ENCODE measurements at regions of chr2 and their contacts with region 1.

Region 1: GRCh38 chr2:85728883-85729824 is 24.6 kb upstream of the ATOH8 start:
- DNase-seq: no peak
- H3K4me3 ChIP-seq: no peak overlapping the region
- H3K27me3 ChIP-seq: no peaks in the 10 kb centered on the region
- CTCF ChIP-seq: peak; percentile 99

Region 2: GRCh38 chr2:85538486-85539360 is 190.4 kb before region 1 on chr2 and contains the start of gene MAT2A:
- CTCF ChIA-PET with region 1: no interaction called
- POLR2A ChIA-PET with region 1: interaction called, 13 read pairs
- DNase-seq: no peak
- H3K4me3 ChIP-seq: peak within 1 kb of the TSS; percentile 98
- H3K27me3 ChIP-seq: no peaks in the 10 kb centered on the region
- CTCF ChIP-seq: peak; percentile 83
- polyA plus RNA-seq, gene MAT2A: 261 and 302 TPM in 2 replicates

Region 3: DNA sequence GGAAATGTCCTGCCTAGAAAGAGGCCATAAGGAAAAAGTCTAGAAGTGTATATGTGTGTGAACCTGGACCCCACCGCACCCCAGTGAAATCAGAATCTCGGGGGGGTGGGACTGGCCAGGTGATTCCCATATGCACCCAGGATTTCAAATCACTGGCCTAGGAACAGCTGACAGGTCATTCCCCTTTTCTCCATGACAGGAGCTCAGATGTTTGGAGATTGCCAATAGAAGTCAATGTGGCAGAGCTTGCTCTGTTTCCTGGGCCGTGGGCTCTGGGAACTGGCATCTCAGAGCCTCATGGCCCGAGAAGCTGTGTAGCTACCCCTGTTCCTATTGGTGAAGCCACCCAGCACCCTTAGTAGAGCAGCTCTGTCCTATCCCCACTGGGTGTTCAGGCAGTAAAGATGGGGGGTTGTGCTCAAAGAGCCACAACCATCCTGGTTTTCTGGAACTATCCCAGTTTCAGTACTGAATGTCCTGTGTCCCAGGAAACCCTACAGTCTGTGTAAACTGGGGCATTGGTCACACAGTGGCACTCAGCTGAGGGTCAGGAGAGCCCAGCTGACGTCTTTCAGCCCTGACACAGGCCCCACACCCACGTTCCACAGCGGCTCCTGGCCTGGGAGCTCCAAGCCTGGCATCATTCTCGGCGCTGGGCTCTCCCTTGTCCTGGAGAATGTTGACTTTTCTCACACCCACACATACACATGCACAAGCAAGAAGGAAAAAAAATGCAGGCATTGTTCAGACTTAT is 16.1 kb before region 1 on chr2:
- CTCF ChIA-PET with region 1: interaction called, 31 read pairs
- POLR2A ChIA-PET with region 1: no interaction called
- DNase-seq: no peak
- H3K4me3 ChIP-seq: no peak overlapping the region
- H3K27me3 ChIP-seq: no peaks in the 10 kb centered on the region; the same call in 1 of the 2 replicates
- CTCF ChIP-seq: no peak

Region 4: DNA sequence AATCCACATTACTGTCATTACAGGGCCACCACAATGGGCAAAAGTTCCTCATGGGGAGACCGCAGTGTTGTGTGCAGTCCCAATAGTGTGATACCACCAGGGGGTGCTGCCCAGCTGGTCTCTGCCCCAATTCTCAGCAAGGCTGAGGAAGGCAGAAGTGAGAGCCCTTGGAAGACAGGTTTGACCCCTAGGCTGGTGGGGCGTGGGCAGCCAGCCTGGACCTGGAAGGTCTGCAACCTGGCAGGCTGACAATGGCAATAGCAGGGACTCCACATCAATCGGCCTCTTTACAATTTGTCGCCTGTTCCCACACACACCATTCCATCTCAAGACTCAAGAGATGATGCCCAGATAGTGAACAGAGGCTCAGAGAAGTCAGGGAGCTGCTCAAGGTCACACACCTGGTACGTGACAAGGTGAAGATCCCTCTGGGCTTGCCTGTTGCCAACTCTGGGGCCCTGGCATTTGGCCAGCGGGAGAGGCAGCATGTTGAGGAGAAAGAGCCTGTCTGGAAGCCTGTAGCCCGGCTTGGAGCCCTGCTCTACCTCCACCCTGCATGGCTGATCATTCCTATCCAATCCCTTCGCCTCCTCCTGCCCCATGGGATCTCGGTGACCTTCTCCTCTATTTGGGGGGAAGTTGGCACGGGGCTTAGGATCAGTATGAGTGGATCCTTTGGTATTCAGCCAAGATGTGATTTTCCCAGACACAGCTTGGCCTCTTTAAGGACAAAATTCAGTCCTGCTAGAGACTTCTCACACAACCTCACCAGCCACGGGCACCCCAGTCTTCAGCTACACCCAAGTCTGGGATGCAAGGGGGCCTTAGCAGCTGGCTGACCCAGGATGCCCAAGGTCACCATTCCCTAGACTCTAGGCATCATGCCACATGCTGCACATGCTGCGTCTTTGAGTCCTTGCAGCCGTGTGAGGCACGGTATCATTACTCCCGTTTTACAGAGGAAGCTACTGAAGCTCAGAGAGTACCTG is 21.7 kb after region 1 on chr2:
- CTCF ChIA-PET with region 1: interaction called, 58 read pairs
- POLR2A ChIA-PET with region 1: no interaction called
- DNase-seq: no peak
- H3K4me3 ChIP-seq: no peak overlapping the region
- H3K27me3 ChIP-seq: no peaks in the 10 kb centered on the region
- CTCF ChIP-seq: peak; percentile 90

Region 5: DNA sequence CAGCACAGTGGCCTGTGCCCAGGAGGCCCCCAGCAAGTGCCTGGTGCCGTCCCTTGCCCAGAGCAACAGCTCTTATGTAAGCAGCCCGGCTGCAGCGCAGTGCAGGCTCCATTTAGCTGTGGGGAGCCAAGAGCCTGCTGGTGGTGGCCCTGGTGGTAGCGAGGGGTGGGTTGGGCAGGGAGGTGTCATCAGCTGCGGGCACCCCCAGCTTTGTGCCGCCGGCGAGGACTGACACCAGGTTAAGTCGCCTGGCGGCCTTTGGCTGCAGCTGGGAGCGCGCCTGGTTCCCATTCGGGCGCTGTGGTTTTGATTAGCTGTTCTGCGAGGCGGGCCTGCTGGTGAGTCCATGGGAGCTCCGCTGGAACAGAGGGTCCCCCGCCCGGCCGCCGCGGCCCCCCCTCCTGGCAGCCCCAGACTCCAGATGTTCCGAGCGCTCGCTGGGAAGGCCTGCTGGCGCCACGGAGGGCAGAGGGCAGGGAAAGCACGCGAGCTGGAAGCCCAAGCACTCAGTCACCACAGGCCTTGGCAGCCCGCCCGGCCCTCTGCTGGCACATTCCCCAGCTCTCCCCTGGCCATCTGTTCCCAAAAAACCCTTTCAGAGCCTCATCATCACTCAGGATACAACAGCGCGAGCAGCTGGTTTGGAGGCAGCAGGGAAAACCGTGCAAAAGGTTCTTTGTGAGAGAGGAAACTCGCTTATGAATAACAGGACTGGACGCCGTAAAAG is 43.0 kb after region 1 on chr2:
- CTCF ChIA-PET with region 1: interaction called, 10 read pairs
- POLR2A ChIA-PET with region 1: no interaction called
- DNase-seq: peak; percentile 99
- H3K4me3 ChIP-seq: no peak overlapping the region; the same call in 1 of the 2 replicates
- H3K27me3 ChIP-seq: no peaks in the 10 kb centered on the region
- CTCF ChIP-seq: peak; percentile 32; the same call in 1 of the 2 replicates

Region 6: DNA sequence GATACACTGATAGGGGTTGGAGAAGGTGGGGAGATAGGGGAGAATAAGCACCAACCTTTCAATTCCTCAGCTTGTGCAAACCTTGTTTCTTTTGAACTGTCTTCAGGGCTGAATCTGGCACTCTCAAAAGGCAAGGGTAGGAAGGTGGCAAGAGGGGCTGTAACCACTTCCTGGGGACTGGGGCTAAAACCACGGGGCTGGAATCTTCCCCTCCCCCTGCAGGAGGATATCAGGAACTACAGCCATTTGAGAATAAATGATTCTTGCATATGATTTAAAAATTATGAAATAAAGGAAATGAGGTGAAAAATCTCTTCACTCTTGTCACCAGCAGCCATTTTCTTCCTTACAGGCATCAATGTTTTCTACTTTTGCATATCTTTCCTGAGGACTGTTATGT is 75.4 kb after region 1 on chr2:
- CTCF ChIA-PET with region 1: interaction called, 194 read pairs
- POLR2A ChIA-PET with region 1: no interaction called
- DNase-seq: no peak
- H3K4me3 ChIP-seq: no peak overlapping the region
- H3K27me3 ChIP-seq: no peaks in the 10 kb centered on the region
- CTCF ChIP-seq: peak; percentile 69

Region 7: DNA sequence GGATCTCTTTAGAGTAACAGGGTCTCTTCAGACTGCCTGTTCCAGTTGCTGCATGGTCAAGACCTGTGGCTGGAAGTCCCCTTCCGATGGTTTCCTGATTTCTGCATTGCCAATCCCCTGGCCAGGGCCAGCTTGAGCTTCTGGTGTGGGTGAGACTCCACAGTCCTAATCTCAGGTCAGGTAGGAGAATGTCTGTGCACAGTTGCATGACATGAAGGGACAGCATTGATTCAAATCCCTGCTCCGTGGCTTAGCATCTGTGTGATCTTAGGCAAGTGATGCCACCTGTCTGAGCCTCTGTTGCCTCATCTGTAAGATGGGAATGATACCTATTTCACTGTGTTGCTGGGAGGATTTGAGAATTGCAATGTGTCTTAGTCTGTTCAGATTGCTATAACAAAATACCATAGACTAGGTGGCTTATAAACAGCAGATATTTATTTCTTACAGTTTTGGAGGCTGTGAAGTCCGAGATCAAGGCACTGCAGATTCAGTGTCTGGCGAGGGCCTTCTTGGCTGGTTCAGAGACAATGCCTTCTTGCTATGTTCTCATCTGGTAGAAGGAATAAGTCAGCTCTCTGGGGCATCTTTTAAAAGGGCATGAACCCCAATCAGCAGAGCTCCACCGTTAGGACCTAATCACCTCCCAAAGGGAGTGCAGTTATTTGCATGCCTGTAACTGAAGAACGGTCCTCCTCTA is 90.8 kb after region 1 on chr2:
- CTCF ChIA-PET with region 1: interaction called, 194 read pairs
- POLR2A ChIA-PET with region 1: interaction called, 3 read pairs
- DNase-seq: no peak
- H3K4me3 ChIP-seq: no peak overlapping the region
- H3K27me3 ChIP-seq: no peaks in the 10 kb centered on the region; the same call in 1 of the 2 replicates
- CTCF ChIP-seq: no peak

Region 8: DNA sequence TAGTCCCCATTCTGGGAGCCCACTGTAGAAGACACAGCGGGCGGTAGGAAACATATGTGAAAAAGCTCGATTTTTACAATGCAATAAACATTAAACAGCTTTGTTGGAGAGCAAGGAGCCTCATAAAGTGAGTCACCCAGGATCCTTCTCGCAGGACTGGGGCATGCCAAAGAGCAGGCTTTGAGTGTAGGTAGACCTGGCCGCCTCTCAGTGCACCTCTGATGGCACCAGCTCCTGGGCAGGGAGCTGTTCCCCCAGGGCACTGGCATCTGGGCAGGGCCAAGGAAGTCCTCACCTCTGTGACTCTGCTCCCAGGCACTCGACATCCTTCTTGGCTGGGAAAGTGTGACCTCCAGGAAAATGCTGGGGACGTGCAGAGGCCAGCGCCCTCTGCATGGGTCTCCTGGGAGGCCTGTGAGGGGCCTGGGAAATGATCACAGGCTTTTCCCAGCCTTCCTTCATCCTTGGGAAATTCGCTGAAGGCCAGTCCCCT is 282.3 kb after region 1 on chr2:
- CTCF ChIA-PET with region 1: no interaction called
- POLR2A ChIA-PET with region 1: no interaction called
- DNase-seq: no peak
- H3K4me3 ChIP-seq: no peak overlapping the region
- H3K27me3 ChIP-seq: no peaks in the 10 kb centered on the region; the same call in 1 of the 2 replicates
- CTCF ChIP-seq: no peak

Measured in BJ (cell line).